Activated CD4-positive, alpha-beta memory T cell treated with anti-CD3 and anti-CD28 coated beads for 36 hours (primary cell): ENCODE measurements at regions of chr10 and their contacts with region 1.

Region 1: GRCh38 chr10:17216217-17216900 is 11.7 kb upstream of the VIM start:
- DNase-seq: peak; percentile 35
- H3K4me3 Mint-ChIP-seq: peak overlapping the region; percentile 7
- H3K27ac Mint-ChIP-seq: peak overlapping the region; percentile 88
- H3K4me1 Mint-ChIP-seq: peaks cover 44% of the 10 kb centered on the region
- H3K27me3 Mint-ChIP-seq: no peaks in the 10 kb centered on the region

Region 2: GRCh38 chr10:17200912-17201793 is 15.2 kb before region 1 on chr10 and contains the start of gene TRDMT1:
- CTCF ChIA-PET with region 1: interaction called, 5 read pairs
- POLR2A ChIA-PET with region 1: interaction called, 12 read pairs
- intact Hi-C with region 1: loop called (anchors 1 kb)
- DNase-seq: peak; percentile 82
- H3K4me3 Mint-ChIP-seq: peak within 1 kb of the TSS; percentile 94
- H3K27ac Mint-ChIP-seq: peak within 1 kb of the TSS; percentile 91
- H3K4me1 Mint-ChIP-seq: peaks cover 46% of the 10 kb centered on the region
- H3K27me3 Mint-ChIP-seq: no peaks in the 10 kb centered on the region
- total RNA-seq, gene TRDMT1: 5.0 to 5.8 TPM

Region 3: GRCh38 chr10:17206210-17206709 is 10.1 kb before region 1 on chr10:
- CTCF ChIA-PET with region 1: interaction called, 7 read pairs
- POLR2A ChIA-PET with region 1: interaction called, 12 read pairs
- intact Hi-C with region 1: loop called (anchors 1 kb)
- DNase-seq: peak; percentile 63
- H3K4me3 Mint-ChIP-seq: peak overlapping the region; percentile 31
- H3K27ac Mint-ChIP-seq: peak overlapping the region; percentile 84
- H3K4me1 Mint-ChIP-seq: peaks cover 50% of the 10 kb centered on the region
- H3K27me3 Mint-ChIP-seq: no peaks in the 10 kb centered on the region

Region 4: DNA sequence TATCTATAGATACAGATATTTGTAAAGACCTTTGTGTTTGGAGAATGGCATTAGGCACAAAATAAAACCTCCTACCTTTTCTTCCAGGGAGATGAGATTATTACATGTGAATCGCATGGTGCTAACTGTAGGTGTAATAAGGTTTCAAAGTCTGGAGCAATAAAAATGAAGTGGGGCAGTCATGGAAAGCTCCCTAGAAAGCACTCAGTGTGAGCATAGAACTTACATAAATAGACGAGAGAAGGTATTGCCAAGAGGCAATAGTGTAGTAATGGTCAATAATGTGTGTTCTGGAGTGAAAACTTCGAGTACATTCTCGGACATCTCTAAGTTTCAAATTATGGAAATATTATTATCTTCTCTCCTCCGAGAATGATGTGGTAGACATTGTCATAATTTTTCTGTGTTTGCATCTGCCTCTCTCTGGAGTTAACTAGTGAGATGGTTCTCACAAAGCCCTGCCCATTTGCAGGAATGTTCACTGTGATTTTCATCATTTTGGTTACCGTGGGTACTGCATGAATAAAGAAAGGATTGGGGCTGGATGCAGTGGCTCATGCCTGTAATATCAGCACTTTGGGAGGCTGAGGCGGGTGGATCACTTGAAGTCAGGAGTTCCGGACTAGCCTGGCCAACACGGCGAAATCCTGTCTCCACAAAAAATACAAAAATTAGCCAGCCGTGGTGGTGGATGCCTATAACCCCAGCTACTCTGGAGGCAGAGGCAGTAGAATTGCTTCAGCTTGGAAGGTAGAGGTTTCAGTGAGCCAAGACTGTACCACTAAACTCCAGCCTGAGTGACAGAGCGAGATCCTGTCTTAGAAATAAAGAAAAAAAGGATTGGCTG is 22.3 kb after region 1 on chr10:
- CTCF ChIA-PET with region 1: no interaction called
- POLR2A ChIA-PET with region 1: no interaction called
- intact Hi-C with region 1: no loop called
- DNase-seq: no peak
- H3K4me3 Mint-ChIP-seq: no peak overlapping the region
- H3K27ac Mint-ChIP-seq: no peak overlapping the region
- H3K4me1 Mint-ChIP-seq: peaks cover 31% of the 10 kb centered on the region
- H3K27me3 Mint-ChIP-seq: no peaks in the 10 kb centered on the region